GM12878 (cell line): ENCODE measurements at regions of chr3 and their contacts with region 1.

Region 1: GRCh38 chr3:98022978-98023820 is 11.9 kb downstream of the GABRR3 start:
- DNase-seq: no peak
- ATAC-seq: peak; percentile 93
- H3K4me3 ChIP-seq: no peak overlapping the region
- H3K27ac ChIP-seq: no peak overlapping the region
- H3K4me1 ChIP-seq: no peaks in the 10 kb centered on the region
- H3K27me3 ChIP-seq: no peaks in the 10 kb centered on the region
- CTCF ChIP-seq: peak; percentile 85 to 94 (median 85)
- EP300 ChIP-seq: no peak
- POLR2A ChIP-seq: no peak
- RAD21 ChIP-seq: peak; percentile 100

Region 2: DNA sequence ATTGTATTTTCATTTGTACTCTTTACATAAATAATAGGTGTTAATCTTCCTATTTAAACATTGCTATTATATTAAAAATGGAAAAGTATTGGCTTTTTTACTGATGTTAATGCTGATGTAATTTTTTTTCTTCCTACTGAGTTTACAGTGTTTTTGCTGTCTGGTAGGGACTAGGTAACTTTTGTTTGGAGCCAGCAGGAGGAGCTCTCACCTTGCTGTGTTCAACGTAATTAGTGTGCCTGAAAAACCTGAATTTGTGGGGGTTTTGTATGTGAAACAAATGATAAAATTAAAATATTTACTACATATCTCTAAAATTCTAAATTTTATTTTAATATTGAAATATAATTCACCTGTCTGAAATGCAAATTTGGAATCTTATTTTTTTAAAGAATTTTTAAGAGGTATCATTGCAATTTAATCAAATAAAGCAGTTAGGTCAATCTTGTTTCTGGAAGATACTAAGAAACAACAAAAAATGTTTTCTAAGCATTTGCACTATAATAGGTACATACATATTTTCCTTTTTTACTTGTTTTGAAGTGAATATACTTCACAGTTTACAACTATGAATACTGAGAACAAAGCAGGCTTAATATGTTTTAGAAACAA is 1160.0 kb before region 1 on chr3:
- CTCF ChIA-PET with region 1: interaction called, 6 read pairs
- POLR2A ChIA-PET with region 1: no interaction called
- RAD21 ChIA-PET with region 1: no interaction called
- SMC1A ChIA-PET with region 1: interaction called, 3 read pairs
- in situ Hi-C with region 1: no loop called
- intact Hi-C with region 1: loop called (anchors 5 kb)
- DNase-seq: no peak
- ATAC-seq: peak; percentile 75
- H3K4me3 ChIP-seq: no peak overlapping the region
- H3K27ac ChIP-seq: no peak overlapping the region
- H3K4me1 ChIP-seq: no peaks in the 10 kb centered on the region
- H3K27me3 ChIP-seq: no peaks in the 10 kb centered on the region
- CTCF ChIP-seq: peak; percentile 65 to 71 (median 68)
- EP300 ChIP-seq: no peak
- POLR2A ChIP-seq: no peak
- RAD21 ChIP-seq: peak; percentile 77

Region 3: DNA sequence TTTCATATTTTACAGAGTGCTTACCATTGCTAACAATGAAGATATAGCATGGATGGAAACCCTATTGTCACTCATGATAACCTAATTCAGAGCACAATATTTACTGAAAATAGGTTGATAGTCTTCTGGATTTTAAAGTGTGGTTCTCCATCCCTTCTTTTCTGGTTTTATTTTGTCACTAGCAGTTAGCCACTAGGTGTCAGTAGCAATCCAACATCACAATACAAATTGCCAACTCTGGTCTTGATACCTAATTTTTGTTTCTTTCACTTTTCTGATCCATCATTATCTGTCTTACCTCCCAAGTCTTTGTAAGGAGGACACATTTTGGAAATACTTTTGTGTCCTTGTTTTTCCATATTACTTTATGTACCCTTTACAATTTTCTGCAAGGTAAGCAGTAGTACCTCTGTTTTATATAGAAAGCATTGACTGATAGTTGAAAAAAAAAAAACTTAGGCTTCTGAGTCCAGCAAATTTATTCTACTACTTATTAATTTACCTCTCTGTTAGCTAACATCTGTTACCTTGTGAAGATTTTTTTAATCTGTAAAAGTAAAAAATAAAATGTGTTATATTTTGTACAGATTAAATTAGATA is 229.7 kb before region 1 on chr3:
- CTCF ChIA-PET with region 1: interaction called, 153 read pairs
- POLR2A ChIA-PET with region 1: interaction called, 6 read pairs
- RAD21 ChIA-PET with region 1: interaction called, 40 read pairs
- SMC1A ChIA-PET with region 1: interaction called, 50 read pairs
- in situ Hi-C with region 1: loop called (anchors 5 kb)
- intact Hi-C with region 1: loop called (anchors 1 kb)
- DNase-seq: peak; percentile 4
- ATAC-seq: peak; percentile 74
- H3K4me3 ChIP-seq: no peak overlapping the region
- H3K27ac ChIP-seq: no peak overlapping the region
- H3K4me1 ChIP-seq: no peaks in the 10 kb centered on the region
- H3K27me3 ChIP-seq: no peaks in the 10 kb centered on the region
- CTCF ChIP-seq: peak; percentile 57 to 80 (median 68); a peak in 4 of 6 replicates
- EP300 ChIP-seq: no peak
- POLR2A ChIP-seq: no peak
- RAD21 ChIP-seq: peak; percentile 90

Region 4: DNA sequence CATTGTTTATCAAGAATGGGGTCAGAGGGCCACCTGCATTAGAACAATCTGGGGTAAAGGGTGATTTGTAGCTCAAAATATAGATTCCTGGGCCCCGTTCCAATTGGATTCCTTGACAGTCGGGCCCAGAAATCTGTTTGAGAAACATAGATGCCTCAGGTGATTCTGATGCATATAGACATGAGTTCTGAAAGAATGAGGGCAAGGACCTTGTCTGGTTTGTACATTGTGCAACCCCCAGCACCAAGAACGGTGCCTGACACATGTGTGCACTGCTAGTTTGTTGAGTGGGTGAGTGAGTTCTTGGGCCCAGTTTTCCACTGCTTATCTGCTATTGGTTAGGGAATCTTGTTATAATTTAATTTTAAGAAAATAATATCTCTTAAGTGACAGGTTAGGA is 184.8 kb before region 1 on chr3:
- CTCF ChIA-PET with region 1: interaction called, 10 read pairs
- POLR2A ChIA-PET with region 1: no interaction called
- RAD21 ChIA-PET with region 1: interaction called, 5 read pairs
- SMC1A ChIA-PET with region 1: interaction called, 3 read pairs
- in situ Hi-C with region 1: no loop called
- intact Hi-C with region 1: no loop called
- DNase-seq: no peak
- ATAC-seq: no peak
- H3K4me3 ChIP-seq: no peak overlapping the region
- H3K27ac ChIP-seq: no peak overlapping the region
- H3K4me1 ChIP-seq: no peaks in the 10 kb centered on the region
- H3K27me3 ChIP-seq: no peaks in the 10 kb centered on the region
- CTCF ChIP-seq: no peak
- EP300 ChIP-seq: no peak
- POLR2A ChIP-seq: no peak
- RAD21 ChIP-seq: no peak

Region 5: GRCh38 chr3:98003306-98003969 is 19.8 kb before region 1 on chr3:
- CTCF ChIA-PET with region 1: interaction called, 22 read pairs
- POLR2A ChIA-PET with region 1: no interaction called
- RAD21 ChIA-PET with region 1: interaction called, 5 read pairs
- SMC1A ChIA-PET with region 1: interaction called, 19 read pairs
- in situ Hi-C with region 1: no loop called
- intact Hi-C with region 1: no loop called
- DNase-seq: no peak
- ATAC-seq: peak; percentile 73
- H3K4me3 ChIP-seq: no peak overlapping the region
- H3K27ac ChIP-seq: peak overlapping the region; percentile 10; the same call in 1 of the 2 replicates
- H3K4me1 ChIP-seq: peaks cover 15% of the 10 kb centered on the region; the same call in 1 of the 2 replicates
- H3K27me3 ChIP-seq: no peaks in the 10 kb centered on the region
- CTCF ChIP-seq: no peak
- EP300 ChIP-seq: no peak
- POLR2A ChIP-seq: no peak
- RAD21 ChIP-seq: no peak

Region 6: GRCh38 chr3:98130421-98130820 is 107.2 kb after region 1 on chr3 and contains the start of gene OR5H1:
- CTCF ChIA-PET with region 1: no interaction called
- POLR2A ChIA-PET with region 1: no interaction called
- RAD21 ChIA-PET with region 1: no interaction called
- SMC1A ChIA-PET with region 1: no interaction called
- in situ Hi-C with region 1: no loop called
- intact Hi-C with region 1: no loop called
- DNase-seq: no peak
- ATAC-seq: no peak
- H3K4me3 ChIP-seq: no peak within 1 kb of the TSS
- H3K27ac ChIP-seq: no peak within 1 kb of the TSS
- H3K4me1 ChIP-seq: no peaks in the 10 kb centered on the region
- H3K27me3 ChIP-seq: no peaks in the 10 kb centered on the region
- CTCF ChIP-seq: no peak
- EP300 ChIP-seq: no peak
- POLR2A ChIP-seq: no peak
- RAD21 ChIP-seq: no peak
- polyA plus RNA-seq, gene OR5H1: not detected